ENCODE measurements at regions of chr11 and their contacts with region 1.

Region 1: DNA sequence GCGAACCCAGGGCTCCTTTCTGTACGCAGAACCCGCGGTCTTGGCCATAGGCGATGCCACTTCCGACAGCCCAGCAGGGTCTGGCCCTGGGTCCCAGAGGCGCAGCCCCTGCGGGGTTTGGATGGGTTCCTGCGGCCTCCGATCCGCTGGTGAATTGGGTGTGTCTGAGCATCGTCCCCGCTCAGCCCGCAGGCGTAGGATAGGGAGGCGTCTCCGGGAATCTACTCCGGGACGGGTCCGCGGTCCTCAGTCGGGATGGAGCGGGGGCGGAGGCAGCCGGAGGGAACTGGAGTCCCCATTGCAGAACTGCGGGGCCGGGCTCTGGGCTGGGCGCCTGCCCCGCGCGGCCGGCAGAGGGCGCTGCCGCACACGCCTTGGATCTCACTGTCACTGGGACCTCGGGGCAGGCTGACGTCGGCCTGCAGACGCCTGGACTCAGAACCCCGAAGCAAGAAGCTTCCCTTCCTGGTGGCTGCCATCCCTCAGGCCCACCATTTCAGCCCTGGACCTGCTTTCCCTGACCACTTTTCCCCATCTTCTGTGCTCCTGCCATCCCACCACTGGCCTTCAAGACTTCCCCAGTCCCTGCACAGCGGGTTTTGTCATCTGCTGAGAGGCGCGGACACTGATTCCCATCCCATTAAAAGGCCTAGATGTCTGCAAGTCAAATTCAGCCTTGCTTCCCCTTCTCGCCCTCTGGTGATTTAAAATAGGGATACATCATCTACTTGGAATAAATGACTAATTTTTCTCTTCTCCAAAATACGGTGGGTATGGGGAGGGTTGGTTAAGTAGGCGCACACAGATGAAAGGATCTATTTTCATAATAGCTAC is 38.3 kb upstream of the CREB3L1 start:
- DNase-seq: no peak
- H3K4me3 ChIP-seq: peak overlapping the region; percentile 32
- H3K27me3 ChIP-seq: no peaks in the 10 kb centered on the region
- CTCF ChIP-seq: peak; percentile 81

Region 2: GRCh38 chr11:45899448-45900173 is 339.6 kb before region 1 on chr11:
- CTCF ChIA-PET with region 1: no interaction called
- POLR2A ChIA-PET with region 1: no interaction called
- DNase-seq: peak; percentile 36
- H3K4me3 ChIP-seq: peak overlapping the region; percentile 66
- H3K27me3 ChIP-seq: peaks cover 3% of the 10 kb centered on the region
- CTCF ChIP-seq: no peak

Region 3: DNA sequence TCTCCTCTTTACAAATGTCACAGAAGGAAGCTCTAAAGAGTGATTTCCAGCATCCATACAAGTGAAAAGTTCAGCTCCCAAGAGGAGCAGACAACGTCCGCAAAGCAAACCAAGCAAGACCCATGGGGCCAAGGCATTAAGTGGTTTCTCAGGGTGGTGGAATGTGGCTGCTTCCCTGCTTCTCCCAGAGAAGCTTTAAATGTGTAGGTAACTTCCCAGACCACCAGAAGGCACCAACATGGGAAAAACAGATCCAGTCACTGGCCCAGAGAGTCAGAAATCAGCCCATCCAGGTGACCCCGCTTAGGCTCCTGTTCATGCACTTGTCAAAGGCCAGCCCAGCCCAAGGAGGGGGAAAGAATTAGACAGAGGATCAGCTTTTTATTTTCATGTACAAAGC is 104.6 kb before region 1 on chr11:
- CTCF ChIA-PET with region 1: no interaction called
- POLR2A ChIA-PET with region 1: no interaction called
- DNase-seq: no peak
- H3K4me3 ChIP-seq: no peak overlapping the region
- H3K27me3 ChIP-seq: peaks cover 10% of the 10 kb centered on the region
- CTCF ChIP-seq: no peak

Region 4: GRCh38 chr11:46222490-46223251 is 16.5 kb before region 1 on chr11:
- CTCF ChIA-PET with region 1: no interaction called
- POLR2A ChIA-PET with region 1: no interaction called
- DNase-seq: no peak
- H3K4me3 ChIP-seq: no peak overlapping the region
- H3K27me3 ChIP-seq: peaks cover 4% of the 10 kb centered on the region; the same call in 1 of the 2 replicates
- CTCF ChIP-seq: no peak

Region 5: DNA sequence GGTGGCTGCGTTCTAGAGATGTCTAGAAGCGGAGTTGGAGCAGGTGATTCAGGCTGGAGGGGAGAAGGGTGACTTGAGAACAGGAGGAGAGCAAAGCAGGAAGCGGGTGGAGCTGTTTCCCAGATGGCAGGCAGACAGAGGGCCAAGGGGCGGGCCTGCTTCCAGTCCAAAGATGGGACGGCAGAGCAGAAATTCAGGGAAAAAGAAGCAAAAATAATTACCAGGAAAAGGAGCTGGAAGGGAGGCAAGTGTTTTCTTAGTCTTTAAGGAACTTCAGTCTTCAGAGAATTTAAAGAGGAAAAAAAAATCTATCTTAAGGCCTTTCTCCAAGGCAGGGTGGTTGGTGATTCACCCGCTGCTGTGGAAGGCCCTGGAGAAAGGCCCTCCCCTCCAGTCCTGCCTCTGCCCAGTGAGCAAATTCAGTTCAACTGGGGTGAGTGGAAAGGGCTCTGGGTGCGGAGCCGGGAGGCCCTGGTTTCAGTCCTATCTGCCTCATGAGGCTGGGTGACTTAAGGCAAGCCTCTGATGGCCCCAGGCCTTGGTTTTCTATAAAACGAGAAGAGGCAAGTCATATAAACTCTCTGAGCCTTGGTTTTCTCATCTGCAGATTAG is 33.7 kb after region 1 on chr11:
- CTCF ChIA-PET with region 1: interaction called, 120 read pairs
- POLR2A ChIA-PET with region 1: interaction called, 13 read pairs
- DNase-seq: no peak
- H3K4me3 ChIP-seq: no peak overlapping the region
- H3K27me3 ChIP-seq: no peaks in the 10 kb centered on the region
- CTCF ChIP-seq: no peak

Region 6: DNA sequence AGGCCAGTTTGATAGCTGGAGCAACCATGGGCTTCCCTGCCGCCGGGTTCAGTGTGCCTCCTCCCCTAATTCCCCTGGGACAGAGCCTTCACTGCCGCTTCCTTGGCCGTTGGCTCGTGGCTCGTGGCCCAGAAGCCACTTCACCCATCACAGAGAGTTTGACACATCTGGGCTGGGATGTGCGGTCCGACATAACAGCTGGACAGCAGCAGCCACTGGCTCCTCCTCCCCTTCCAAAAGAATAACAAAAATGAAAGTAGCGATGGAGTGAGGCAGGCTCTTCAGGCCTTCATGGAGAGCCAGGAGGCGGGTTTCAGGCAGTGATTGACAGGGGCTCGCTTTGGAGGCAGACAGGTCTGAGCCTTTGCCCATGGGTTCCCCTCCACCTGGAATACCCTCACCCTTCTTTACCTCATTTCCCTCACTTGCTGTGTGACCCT is 46.4 kb after region 1 on chr11:
- CTCF ChIA-PET with region 1: interaction called, 68 read pairs
- POLR2A ChIA-PET with region 1: interaction called, 5 read pairs
- DNase-seq: no peak
- H3K4me3 ChIP-seq: no peak overlapping the region
- H3K27me3 ChIP-seq: no peaks in the 10 kb centered on the region
- CTCF ChIP-seq: no peak

Region 7: GRCh38 chr11:46308631-46309419 is 69.6 kb after region 1 on chr11:
- CTCF ChIA-PET with region 1: interaction called, 341 read pairs
- POLR2A ChIA-PET with region 1: interaction called, 3 read pairs
- DNase-seq: no peak
- H3K4me3 ChIP-seq: no peak overlapping the region
- H3K27me3 ChIP-seq: no peaks in the 10 kb centered on the region
- CTCF ChIP-seq: peak; percentile 91

Region 8: GRCh38 chr11:46332568-46333393 is 93.6 kb after region 1 on chr11:
- CTCF ChIA-PET with region 1: interaction called, 15 read pairs
- POLR2A ChIA-PET with region 1: no interaction called
- DNase-seq: no peak
- H3K4me3 ChIP-seq: peak overlapping the region; percentile 27
- H3K27me3 ChIP-seq: peaks cover 22% of the 10 kb centered on the region
- CTCF ChIP-seq: no peak

Measured in BJ (cell line).